PC-9 (cell line): ENCODE measurements at regions of chr1 and their contacts with region 1.

Region 1: DNA sequence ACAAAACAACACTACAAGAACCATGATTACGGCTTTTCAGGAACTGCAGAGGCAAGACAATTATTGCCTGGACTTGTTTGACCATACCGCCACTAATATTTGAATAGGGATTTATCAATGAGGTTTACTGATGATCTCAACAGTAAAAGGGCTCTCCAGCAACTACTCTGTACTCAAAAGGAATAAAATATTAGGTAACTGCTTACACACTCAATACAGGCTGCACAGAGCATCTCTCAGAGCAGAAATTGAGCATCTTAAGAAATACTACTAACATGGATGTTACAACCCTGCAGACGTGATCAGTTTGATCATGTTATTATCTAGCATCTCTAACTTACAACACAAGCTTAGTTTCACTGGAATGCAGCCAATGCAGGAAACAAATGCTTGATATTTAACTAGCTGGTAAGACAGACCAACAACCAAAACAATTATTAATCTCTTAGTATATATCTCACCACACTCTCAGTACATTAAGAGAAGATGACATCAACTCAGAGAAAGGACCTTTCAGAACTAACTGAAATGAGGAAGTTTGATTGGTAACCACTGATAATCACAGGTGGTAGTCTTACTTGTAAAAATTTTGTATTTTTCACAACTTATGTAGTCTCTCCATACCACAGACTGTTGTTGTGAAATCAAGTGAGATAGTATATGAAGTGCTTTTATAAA is 52.2 kb downstream of the PUM1 start:
- DNase-seq: no peak
- H3K4me3 ChIP-seq: no peak overlapping the region
- H3K27ac ChIP-seq: no peak overlapping the region
- H3K4me1 ChIP-seq: peaks cover 1% of the 10 kb centered on the region; the same call in 1 of the 2 replicates
- H3K27me3 ChIP-seq: no peaks in the 10 kb centered on the region
- CTCF ChIP-seq: no peak

Region 2: GRCh38 chr1:30990591-30990990 is 22.7 kb before region 1 on chr1:
- CTCF ChIA-PET with region 1: interaction called, 5 read pairs
- POLR2A ChIA-PET with region 1: interaction called, 12 read pairs
- intact Hi-C with region 1: no loop called
- DNase-seq: no peak
- H3K4me3 ChIP-seq: no peak overlapping the region
- H3K27ac ChIP-seq: no peak overlapping the region
- H3K4me1 ChIP-seq: no peaks in the 10 kb centered on the region
- H3K27me3 ChIP-seq: no peaks in the 10 kb centered on the region
- CTCF ChIP-seq: no peak